Activated CD8-positive, alpha-beta T cell treated with anti-CD3 and anti-CD28 coated beads for 36 hours (primary cell): ENCODE measurements at regions of chr1 and their contacts with region 1.

Region 1: GRCh38 chr1:156781585-156782186 is 14.4 kb downstream of the PRCC start:
- DNase-seq: no peak
- ATAC-seq: no peak
- H3K4me3 Mint-ChIP-seq: no peak overlapping the region
- H3K27ac Mint-ChIP-seq: no peak overlapping the region
- H3K4me1 Mint-ChIP-seq: peaks cover 30% of the 10 kb centered on the region
- H3K27me3 Mint-ChIP-seq: no peaks in the 10 kb centered on the region
- CTCF ChIP-seq: no peak

Region 2: GRCh38 chr1:156540791-156541383 is 240.8 kb before region 1 on chr1:
- CTCF ChIA-PET with region 1: no interaction called
- POLR2A ChIA-PET with region 1: no interaction called
- intact Hi-C with region 1: no loop called
- DNase-seq: no peak
- ATAC-seq: no peak
- H3K4me3 Mint-ChIP-seq: no peak overlapping the region
- H3K27ac Mint-ChIP-seq: no peak overlapping the region
- H3K4me1 Mint-ChIP-seq: peaks cover 1% of the 10 kb centered on the region
- H3K27me3 Mint-ChIP-seq: no peaks in the 10 kb centered on the region
- CTCF ChIP-seq: no peak

Region 3: DNA sequence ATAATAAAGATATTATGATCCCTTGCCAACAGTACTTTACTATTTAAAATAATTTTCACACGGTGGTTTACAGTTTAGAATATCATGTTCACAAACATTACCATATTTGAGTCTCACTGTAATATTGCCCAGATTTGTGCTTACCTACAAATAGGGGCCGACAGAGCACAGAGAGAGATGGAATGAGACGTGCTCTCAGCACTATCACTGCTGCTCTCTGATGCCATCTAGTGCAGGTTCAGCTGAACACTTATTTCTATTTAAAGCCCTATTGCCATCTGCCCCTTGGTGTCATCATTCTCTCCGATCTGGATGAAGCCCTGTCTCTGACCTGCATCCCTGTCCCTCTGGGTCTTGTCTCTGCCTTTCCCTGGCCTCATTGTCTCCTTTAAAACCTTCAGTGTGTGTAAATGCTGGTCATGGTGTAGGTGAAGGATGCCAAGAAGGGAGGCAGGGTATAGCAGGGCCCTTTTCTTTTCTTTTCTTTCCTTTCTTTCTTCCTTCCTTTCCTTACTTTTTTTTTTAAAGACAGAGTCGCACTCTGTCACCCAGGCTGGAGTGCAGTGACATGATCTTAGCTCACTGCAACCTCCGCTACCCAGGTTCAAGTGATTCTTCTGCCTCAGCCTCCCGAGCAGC is 173.5 kb before region 1 on chr1:
- CTCF ChIA-PET with region 1: no interaction called
- POLR2A ChIA-PET with region 1: no interaction called
- intact Hi-C with region 1: no loop called
- DNase-seq: peak; percentile 77
- ATAC-seq: peak; percentile 98
- H3K4me3 Mint-ChIP-seq: no peak overlapping the region
- H3K27ac Mint-ChIP-seq: peak overlapping the region; percentile 50
- H3K4me1 Mint-ChIP-seq: peaks cover 8% of the 10 kb centered on the region
- H3K27me3 Mint-ChIP-seq: peaks cover 3% of the 10 kb centered on the region
- CTCF ChIP-seq: peak; percentile 86

Region 4: DNA sequence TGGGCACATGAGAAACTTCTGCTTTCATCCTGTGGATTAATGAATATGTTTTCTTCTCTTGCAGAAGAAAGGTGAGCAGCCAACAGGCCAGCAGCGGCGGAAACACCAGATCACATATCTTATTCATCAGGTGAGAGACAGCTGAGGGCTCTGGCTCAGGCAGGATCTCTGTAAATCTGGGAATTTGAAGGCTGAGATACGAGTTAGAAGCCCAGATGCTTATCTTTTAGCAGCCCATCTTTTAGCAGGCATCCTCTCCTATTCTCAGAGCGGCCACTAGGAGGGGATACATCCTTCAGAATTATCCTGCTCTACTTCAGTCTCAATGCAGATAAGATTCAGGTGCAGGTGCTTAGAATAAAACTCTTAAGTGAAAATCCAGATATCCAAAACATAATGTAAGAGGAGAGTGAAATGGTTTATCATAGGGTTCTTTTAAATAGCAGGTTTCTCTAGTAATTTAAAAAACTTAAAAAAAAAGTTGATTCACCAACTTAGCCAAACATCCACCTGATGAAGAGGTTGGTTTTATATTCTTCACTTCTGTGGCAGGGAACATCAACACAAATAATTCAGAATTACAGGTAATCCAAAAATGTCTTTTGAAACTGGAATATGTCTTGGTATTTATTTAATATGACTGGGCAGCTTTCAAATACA is 15.7 kb after region 1 on chr1:
- CTCF ChIA-PET with region 1: interaction called, 19 read pairs
- POLR2A ChIA-PET with region 1: interaction called, 15 read pairs
- intact Hi-C with region 1: no loop called
- DNase-seq: peak; percentile 77
- ATAC-seq: peak; percentile 84
- H3K4me3 Mint-ChIP-seq: no peak overlapping the region
- H3K27ac Mint-ChIP-seq: no peak overlapping the region
- H3K4me1 Mint-ChIP-seq: peaks cover 6% of the 10 kb centered on the region
- H3K27me3 Mint-ChIP-seq: no peaks in the 10 kb centered on the region
- CTCF ChIP-seq: peak; percentile 91